Motor neuron (in vitro differentiated cells): ENCODE measurements at regions of chr14 and their contacts with region 1.

Region 1: GRCh38 chr14:67111022-67111421 is 78.2 kb upstream of the GARIN2 start:
- ATAC-seq: peak in 1 of 8 experiments; percentile 70
- H3K4me3 ChIP-seq: no peak overlapping the region
- H3K27ac ChIP-seq: no peak overlapping the region
- H3K4me1 ChIP-seq: peaks cover 0 to 11% of the 10 kb centered on the region in 2 donors

Region 2: DNA sequence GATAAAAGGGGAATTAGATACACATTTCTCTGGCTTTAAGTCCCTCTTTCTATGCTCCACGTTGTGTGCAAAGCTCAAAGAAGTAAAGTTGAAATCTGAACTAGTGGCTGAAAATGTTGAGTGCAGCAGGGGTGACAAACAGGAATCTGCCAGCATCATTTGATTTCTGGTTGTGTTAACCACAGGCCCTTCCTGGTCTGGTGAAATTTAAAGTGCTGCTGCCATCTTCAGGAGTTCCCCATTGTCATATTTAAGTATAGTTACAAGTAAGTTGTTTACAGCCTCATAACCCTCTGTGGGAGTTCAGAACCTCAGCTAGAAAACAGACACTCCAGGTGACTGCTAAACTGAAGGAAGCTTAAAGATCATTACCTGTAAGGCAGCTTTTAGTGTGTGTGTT is 715.7 kb before region 1 on chr14:
- in situ Hi-C with region 1: loop called in 1 of 9 experiments (anchors 25 kb)
- ATAC-seq: peak in 3 of 8 experiments; percentile 40 to 54 (median 53)
- H3K4me3 ChIP-seq: no peak overlapping the region
- H3K27ac ChIP-seq: no peak overlapping the region
- H3K4me1 ChIP-seq: no peaks in the 10 kb centered on the region

Region 3: GRCh38 chr14:66824251-66824650 is 286.8 kb before region 1 on chr14:
- in situ Hi-C with region 1: no loop called
- ATAC-seq: no peak
- H3K4me3 ChIP-seq: no peak overlapping the region
- H3K27ac ChIP-seq: no peak overlapping the region
- H3K4me1 ChIP-seq: no peaks in the 10 kb centered on the region

Region 4: DNA sequence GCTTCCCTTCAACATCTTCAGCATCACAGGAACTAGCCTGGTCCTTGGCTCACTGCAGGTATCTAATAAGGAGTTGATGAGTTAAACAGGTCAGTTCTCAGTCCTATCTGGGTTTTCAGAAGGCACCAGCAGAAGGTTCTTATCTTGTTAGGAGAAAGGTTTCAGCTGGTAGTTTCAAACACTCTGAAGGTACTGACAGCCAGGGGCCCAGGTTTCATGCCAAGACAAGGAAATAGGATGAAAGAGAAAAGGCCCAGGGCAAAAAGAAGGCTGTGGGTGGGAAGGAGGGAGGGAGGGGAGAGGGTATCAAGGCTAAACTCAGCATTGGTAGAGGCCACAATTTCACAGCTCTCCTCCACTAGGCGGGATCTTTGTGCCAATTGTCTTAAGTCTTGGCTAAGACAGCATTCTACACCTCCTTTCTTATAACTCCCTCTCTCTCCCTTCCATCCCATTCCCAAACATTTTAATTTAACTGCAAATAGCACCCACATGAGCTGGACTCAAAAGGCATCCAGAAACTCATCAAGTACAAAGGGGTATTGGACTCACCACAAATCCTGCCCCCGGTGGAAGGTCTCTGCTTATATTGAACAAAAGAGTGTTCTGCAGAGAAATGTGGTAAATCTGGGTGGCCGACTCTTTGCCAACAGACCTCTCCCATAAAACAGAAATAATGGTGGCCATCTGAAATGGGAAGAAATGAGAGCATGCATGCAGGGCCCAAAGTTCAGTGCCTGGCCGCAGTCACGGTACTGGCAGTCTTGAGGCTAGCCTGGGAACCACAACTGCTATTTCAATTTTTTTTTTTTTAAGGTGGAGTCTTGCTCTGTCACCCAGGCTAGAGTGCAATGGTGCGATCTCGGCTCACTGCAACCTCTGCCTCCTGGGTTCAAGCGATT is 356.4 kb after region 1 on chr14:
- in situ Hi-C with region 1: no loop called
- ATAC-seq: no peak
- H3K4me3 ChIP-seq: no peak overlapping the region
- H3K27ac ChIP-seq: no peak overlapping the region
- H3K4me1 ChIP-seq: no peaks in the 10 kb centered on the region